ENCODE measurements at regions of chr10 and their contacts with region 1.

Region 1: GRCh38 chr10:70925377-70926225 is 37.2 kb upstream of the PCBD1 start:
- DNase-seq: peak; percentile 17 to 91
- H3K4me3 ChIP-seq: no peak overlapping the region
- H3K27ac ChIP-seq: no peak overlapping the region
- H3K4me1 ChIP-seq: no peaks in the 10 kb centered on the region
- H3K27me3 ChIP-seq: no peaks in the 10 kb centered on the region; a peak in 1 of 7 replicates
- CTCF ChIP-seq: peak; percentile 89 to 95 (median 91)
- EP300 ChIP-seq: no peak
- POLR2A ChIP-seq: no peak
- RAD21 ChIP-seq: peak; percentile 95 to 96

Region 2: DNA sequence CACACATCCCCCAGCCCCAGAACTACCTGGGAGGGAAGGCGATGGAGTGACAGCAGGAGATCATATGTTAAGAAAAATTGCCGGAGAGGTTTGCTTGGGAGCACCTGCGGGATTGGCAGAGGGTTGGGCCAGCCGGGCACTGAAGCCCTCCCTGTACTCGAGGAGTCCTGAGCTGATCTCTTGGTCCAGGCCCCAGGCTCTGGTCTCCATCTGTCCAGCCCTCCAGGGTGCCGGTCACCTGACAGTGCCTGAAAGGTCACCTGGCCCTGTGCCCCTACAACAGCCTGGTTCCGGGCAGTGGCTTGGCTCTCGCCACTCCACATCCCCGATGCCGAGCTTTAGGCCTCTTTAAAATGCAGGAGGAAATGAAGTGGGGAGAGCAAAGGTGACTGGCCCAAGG is 10.0 kb after region 1 on chr10:
- CTCF ChIA-PET with region 1: interaction called, 34 read pairs
- POLR2A ChIA-PET with region 1: no interaction called
- DNase-seq: no peak
- H3K4me3 ChIP-seq: no peak overlapping the region
- H3K27ac ChIP-seq: no peak overlapping the region
- H3K4me1 ChIP-seq: no peaks in the 10 kb centered on the region
- H3K27me3 ChIP-seq: no peaks in the 10 kb centered on the region; a peak in 1 of 7 replicates
- CTCF ChIP-seq: no peak
- EP300 ChIP-seq: no peak
- POLR2A ChIP-seq: no peak
- RAD21 ChIP-seq: no peak

Region 3: GRCh38 chr10:71040846-71041605 is 115.4 kb after region 1 on chr10:
- CTCF ChIA-PET with region 1: interaction called, 14 read pairs
- POLR2A ChIA-PET with region 1: no interaction called
- DNase-seq: no peak
- H3K4me3 ChIP-seq: no peak overlapping the region
- H3K27ac ChIP-seq: no peak overlapping the region
- H3K4me1 ChIP-seq: peaks cover 0 to 3% (median 0%) of the 10 kb centered on the region in 4 experiments; a peak in 1 of 7 replicates
- H3K27me3 ChIP-seq: no peaks in the 10 kb centered on the region
- CTCF ChIP-seq: no peak
- EP300 ChIP-seq: no peak
- POLR2A ChIP-seq: no peak
- RAD21 ChIP-seq: no peak

Region 4: GRCh38 chr10:71124921-71125748 is 199.5 kb after region 1 on chr10:
- CTCF ChIA-PET with region 1: interaction called, 14 read pairs
- POLR2A ChIA-PET with region 1: no interaction called
- DNase-seq: no peak
- H3K4me3 ChIP-seq: no peak overlapping the region
- H3K27ac ChIP-seq: no peak overlapping the region
- H3K4me1 ChIP-seq: peaks cover 0 to 3% (median 0%) of the 10 kb centered on the region in 4 experiments; a peak in 1 of 7 replicates
- H3K27me3 ChIP-seq: 0 out of 7 replicates have a peak, but pooled peaks cover 0 to 2% (median 0%) of the 10 kb centered on the region in 4 experiments
- CTCF ChIP-seq: peak in 1 of 3 experiments; percentile 26; a peak in 1 of 4 replicates
- EP300 ChIP-seq: no peak
- POLR2A ChIP-seq: no peak
- RAD21 ChIP-seq: peak; percentile 20 to 39; a peak in 1 of 4 replicates

Region 5: GRCh38 chr10:71270301-71271220 is 345.0 kb after region 1 on chr10:
- CTCF ChIA-PET with region 1: interaction called, 35 read pairs
- POLR2A ChIA-PET with region 1: no interaction called
- DNase-seq: peak; percentile 47 to 75
- H3K4me3 ChIP-seq: peak overlapping the region in 1 of 4 experiments; percentile 18; a peak in 1 of 8 replicates
- H3K27ac ChIP-seq: no peak overlapping the region; the same call in 1 of the 2 replicates
- H3K4me1 ChIP-seq: peaks cover 5 to 41% (median 30%) of the 10 kb centered on the region in 4 experiments
- H3K27me3 ChIP-seq: no peaks in the 10 kb centered on the region
- CTCF ChIP-seq: peak; percentile 46 to 68 (median 66)
- EP300 ChIP-seq: no peak
- POLR2A ChIP-seq: no peak
- RAD21 ChIP-seq: peak; percentile 49 to 66